Adrenal gland (tissue), 19 donors: ENCODE measurements at regions of chr1 and their contacts with region 1.

Region 1: DNA sequence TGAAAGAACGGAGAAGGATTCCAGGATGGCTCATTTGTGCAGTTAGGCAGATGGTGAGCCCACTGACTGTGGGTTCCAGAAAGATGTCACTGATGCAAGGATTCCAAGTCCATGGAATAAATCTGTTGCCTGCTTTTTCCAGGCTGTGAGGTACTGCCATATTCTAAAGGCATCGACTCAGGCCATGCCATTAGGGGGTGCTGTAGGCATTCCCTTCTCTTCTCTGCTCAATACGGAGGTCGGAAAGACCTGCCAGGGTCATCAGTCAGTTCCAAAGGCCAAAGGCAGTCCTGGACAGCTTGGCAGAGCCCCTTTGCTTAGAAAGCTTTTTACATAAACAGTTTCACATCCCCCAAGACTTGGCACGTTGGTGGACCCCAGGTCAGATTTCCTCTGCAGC is 31.7 kb upstream of the TMEM125 start:
- DNase-seq: peak; percentile 68 to 90 (median 79)
- H3K4me3 ChIP-seq: no peak overlapping the region
- H3K27ac ChIP-seq: no peak overlapping the region
- H3K4me1 ChIP-seq: no peaks in the 10 kb centered on the region
- H3K27me3 ChIP-seq: no peaks in the 10 kb centered on the region
- CTCF ChIP-seq: peak; percentile 44 to 78 (median 70)
- POLR2A ChIP-seq: no peak

Region 2: GRCh38 chr1:42952303-42953001 is 285.6 kb before region 1 on chr1:
- intact Hi-C with region 1: no loop called
- DNase-seq: no peak
- H3K4me3 ChIP-seq: no peak overlapping the region
- H3K27ac ChIP-seq: peak overlapping the region in 1 of 5 donors; percentile 39
- H3K4me1 ChIP-seq: peaks cover 0 to 8% of the 10 kb centered on the region in 2 donors
- H3K27me3 ChIP-seq: no peaks in the 10 kb centered on the region
- CTCF ChIP-seq: no peak
- POLR2A ChIP-seq: no peak

Region 3: DNA sequence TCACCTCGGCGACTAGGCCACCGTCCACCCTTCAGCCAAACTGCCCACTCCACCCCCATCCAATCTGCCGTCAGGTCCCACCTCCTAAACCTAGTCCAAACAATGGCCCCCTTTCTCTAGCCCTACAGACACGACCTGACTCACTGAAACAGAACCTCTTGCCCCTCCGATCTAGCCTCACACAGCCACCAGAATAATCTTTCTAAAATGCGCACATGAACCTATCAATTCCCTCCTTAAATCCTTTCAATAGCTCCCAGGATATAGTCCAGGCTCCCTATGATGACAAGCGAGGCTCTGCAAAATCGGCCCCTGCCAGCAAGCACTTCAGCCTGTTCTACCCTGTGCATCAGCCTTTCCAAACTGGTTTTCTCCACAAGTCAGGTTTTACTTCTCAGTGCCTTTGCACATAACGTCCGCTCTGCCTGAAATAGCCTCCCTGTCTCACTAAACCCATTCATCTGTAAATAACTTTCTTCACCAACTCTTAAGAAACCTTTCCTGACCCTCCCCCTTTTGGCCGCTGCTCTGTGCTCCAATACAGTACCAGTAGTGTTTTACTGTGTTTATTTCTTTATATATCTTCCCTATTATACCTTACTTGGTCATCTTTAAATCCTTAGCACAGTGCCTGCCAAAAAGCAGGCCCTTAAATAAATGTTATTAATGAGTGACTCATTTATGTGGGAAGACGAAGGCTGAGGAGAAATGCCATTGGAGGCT is 111.7 kb after region 1 on chr1:
- intact Hi-C with region 1: loop called in 1 of 2 experiments (anchors 5 kb)
- DNase-seq: peak in 1 of 7 donors; percentile 55
- H3K4me3 ChIP-seq: peak overlapping the region in 2 of 4 donors; percentile 51 to 63
- H3K27ac ChIP-seq: peak overlapping the region; percentile 67 to 94 (median 88)
- H3K4me1 ChIP-seq: peaks cover 3 to 12% of the 10 kb centered on the region in 2 donors
- H3K27me3 ChIP-seq: no peaks in the 10 kb centered on the region
- CTCF ChIP-seq: no peak
- POLR2A ChIP-seq: no peak

Region 4: DNA sequence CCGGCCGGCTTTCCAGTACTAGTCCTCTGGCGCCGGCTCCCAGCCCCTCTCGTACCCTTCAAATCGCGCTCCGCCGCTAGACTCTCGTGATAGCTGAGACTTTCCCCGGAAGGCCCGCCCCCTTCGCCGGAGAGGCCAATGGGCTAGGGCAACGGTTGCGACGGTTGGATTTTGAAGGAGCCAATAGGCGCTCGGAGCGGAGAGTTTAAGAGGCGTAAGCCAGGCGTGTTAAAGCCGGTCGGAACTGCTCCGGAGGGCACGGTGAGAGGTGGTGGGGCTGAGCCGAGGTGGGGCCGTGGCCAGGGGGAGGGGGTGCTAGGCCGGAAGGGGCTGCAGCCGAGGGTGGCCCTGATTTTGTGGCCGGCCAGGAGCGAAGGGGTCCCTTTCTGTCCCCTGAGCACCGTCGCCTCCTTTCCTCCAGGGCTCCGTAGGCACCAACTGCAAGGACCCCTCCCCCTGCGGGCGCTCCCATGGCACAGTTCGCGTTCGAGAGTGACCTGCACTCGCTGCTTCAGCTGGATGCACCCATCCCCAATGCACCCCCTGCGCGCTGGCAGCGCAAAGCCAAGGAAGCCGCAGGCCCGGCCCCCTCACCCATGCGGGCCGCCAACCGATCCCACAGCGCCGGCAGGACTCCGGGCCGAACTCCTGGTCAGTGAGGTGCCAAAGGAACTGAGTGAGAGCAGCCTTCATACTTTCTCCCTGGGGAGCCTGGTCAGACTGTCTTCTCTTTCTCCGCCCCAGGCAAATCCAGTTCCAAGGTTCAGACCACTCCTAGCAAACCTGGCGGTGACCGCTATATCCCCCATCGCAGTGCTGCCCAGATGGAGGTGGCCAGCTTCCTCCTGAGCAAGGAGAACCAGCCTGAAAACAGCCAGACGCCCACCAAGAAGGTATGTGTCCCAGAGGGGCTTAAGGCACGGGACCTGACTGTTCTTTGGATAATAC is 120.9 kb after region 1 on chr1 and contains the start of gene CDC20:
- intact Hi-C with region 1: loop called (anchors 5 kb)
- DNase-seq: peak; percentile 98 to 99 (median 99)
- H3K4me3 ChIP-seq: peak within 1 kb of the TSS; percentile 27 to 80 (median 65)
- H3K27ac ChIP-seq: peak within 1 kb of the TSS in 4 of 5 donors; percentile 81 to 91 (median 84)
- H3K4me1 ChIP-seq: peaks cover 5 to 18% of the 10 kb centered on the region in 2 donors
- H3K27me3 ChIP-seq: no peaks in the 10 kb centered on the region
- CTCF ChIP-seq: no peak
- POLR2A ChIP-seq: no peak
- total RNA-seq, gene CDC20: 0.32 to 12.8 (median 2.1) TPM

Region 5: GRCh38 chr1:43414634-43415223 is 176.6 kb after region 1 on chr1:
- intact Hi-C with region 1: loop called in 1 of 2 experiments (anchors 5 kb)
- DNase-seq: peak; percentile 49 to 78 (median 58)
- H3K4me3 ChIP-seq: no peak overlapping the region
- H3K27ac ChIP-seq: no peak overlapping the region
- H3K4me1 ChIP-seq: no peaks in the 10 kb centered on the region
- H3K27me3 ChIP-seq: no peaks in the 10 kb centered on the region
- CTCF ChIP-seq: peak; percentile 25 to 67 (median 64)
- POLR2A ChIP-seq: no peak

Region 6: DNA sequence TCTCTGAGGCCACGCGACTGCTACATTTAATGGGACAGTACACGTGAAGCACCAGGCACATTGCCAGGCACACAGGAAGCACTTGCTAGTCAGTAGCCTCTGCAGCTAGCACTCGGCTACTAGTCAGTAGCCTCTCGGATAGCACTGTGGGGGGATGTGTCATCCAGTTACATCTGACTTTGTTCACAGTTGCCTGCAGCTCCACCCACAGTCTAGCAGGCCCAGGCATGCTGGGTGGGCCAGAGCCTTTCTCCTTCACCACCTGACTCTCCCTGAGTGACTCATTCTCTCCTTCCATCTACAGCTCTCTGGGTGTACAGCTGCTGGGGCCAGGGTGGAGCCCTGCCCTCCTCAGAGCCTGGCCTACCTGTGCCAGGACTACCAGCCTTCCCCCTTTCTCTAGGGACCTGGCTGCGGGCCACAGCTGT is 344.1 kb after region 1 on chr1:
- intact Hi-C with region 1: no loop called
- DNase-seq: peak in 6 of 7 donors; percentile 41 to 79 (median 54)
- H3K4me3 ChIP-seq: no peak overlapping the region
- H3K27ac ChIP-seq: no peak overlapping the region
- H3K4me1 ChIP-seq: no peaks in the 10 kb centered on the region
- H3K27me3 ChIP-seq: no peaks in the 10 kb centered on the region
- CTCF ChIP-seq: no peak
- POLR2A ChIP-seq: no peak